Endothelial cell of umbilical vein (primary cell): ENCODE measurements at regions of chr5 and their contacts with region 1.

Region 1: DNA sequence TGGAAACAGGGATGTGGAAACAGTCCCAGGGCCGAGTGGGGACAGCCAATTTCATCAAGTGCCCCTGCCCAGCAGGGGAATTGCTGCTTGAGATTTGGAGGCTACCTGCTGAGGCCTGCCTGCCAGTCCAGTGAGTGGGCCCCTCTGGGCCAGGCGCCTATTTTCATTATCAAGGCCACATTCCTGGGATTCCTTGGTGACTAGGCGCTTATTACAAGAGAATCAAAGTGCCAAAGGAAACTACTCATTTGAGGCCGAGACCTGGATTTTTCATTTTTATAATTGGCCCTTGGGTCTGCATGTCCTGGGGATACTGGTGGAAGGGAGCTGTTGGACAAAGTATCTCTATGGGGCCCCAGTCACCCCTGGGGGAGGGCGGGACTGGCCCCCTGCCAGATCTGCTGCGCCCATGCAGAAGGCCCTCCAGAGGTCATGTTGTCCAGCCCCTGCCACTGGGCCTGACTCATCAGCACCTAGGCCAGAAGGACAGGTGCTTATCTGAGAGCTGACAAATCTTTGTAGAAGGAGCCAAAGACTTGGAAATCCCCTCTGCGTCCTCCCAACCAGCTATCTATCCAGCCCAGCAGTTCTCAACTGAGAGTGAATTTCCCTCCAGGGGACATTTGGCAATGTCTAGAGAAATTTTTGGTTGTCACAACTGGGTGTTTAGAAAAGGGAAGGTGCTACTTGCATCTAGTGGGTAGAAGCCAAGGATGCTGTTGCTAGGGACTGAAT is 45.6 kb downstream of the FOXI1 start:
- DNase-seq: peak; percentile 88
- H3K4me3 ChIP-seq: no peak overlapping the region
- H3K27ac ChIP-seq: peak overlapping the region; percentile 87
- H3K4me1 ChIP-seq: peaks cover 17% of the 10 kb centered on the region
- H3K27me3 ChIP-seq: no peaks in the 10 kb centered on the region
- CTCF ChIP-seq: no peak
- POLR2A ChIP-seq: no peak

Region 2: GRCh38 chr5:169695919-169696490 is 455.3 kb before region 1 on chr5:
- CTCF ChIA-PET with region 1: no interaction called
- POLR2A ChIA-PET with region 1: no interaction called
- dilution Hi-C with region 1: no loop called
- intact Hi-C with region 1: loop called (anchors 2 kb)
- DNase-seq: peak; percentile 96
- H3K4me3 ChIP-seq: no peak overlapping the region
- H3K27ac ChIP-seq: peak overlapping the region; percentile 98
- H3K4me1 ChIP-seq: peaks cover 30% of the 10 kb centered on the region
- H3K27me3 ChIP-seq: no peaks in the 10 kb centered on the region
- CTCF ChIP-seq: no peak
- POLR2A ChIP-seq: peak; percentile 74

Region 3: DNA sequence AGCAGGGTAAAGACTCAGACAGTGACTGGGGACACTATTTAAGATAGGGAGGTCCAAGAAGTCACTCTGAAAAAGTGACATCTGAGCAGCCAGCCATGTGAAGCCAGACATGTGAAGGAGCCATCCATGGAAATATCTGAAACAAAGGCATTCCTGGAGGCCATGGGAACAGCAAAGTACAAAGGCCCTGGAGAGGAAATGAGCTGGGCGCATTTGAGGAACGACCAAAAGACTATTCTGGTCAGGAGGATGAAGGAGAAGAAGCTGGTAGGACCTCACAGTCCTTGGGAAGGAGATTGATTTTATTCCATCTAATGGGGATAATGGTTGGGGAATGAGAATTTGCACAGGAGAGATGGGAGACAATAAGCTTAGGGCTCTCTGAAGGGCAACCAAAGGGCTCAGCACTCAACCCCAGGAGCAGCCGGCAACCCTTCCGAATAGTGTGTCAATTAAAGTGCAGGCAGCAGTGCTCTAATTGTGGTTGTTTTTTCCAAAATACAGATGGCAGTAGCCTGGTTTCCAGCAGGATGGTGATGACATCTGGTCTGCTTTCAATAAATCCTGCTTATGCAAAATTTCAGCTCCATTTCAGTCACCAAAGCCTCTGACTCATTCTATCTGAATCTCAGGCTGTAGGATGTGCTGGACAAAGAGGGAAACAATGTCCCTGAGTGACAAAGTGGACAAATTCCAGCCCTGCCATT is 18.8 kb before region 1 on chr5:
- CTCF ChIA-PET with region 1: interaction called, 4 read pairs
- POLR2A ChIA-PET with region 1: no interaction called
- dilution Hi-C with region 1: no loop called
- intact Hi-C with region 1: loop called (anchors 1 kb)
- DNase-seq: peak; percentile 71
- H3K4me3 ChIP-seq: no peak overlapping the region
- H3K27ac ChIP-seq: peak overlapping the region; percentile 42
- H3K4me1 ChIP-seq: peaks cover 47% of the 10 kb centered on the region
- H3K27me3 ChIP-seq: no peaks in the 10 kb centered on the region
- CTCF ChIP-seq: no peak
- POLR2A ChIP-seq: no peak

Region 4: GRCh38 chr5:170491479-170491878 is 340.2 kb after region 1 on chr5:
- CTCF ChIA-PET with region 1: no interaction called
- POLR2A ChIA-PET with region 1: no interaction called
- dilution Hi-C with region 1: no loop called
- intact Hi-C with region 1: loop called (anchors 5 kb)
- DNase-seq: peak; percentile 91
- H3K4me3 ChIP-seq: no peak overlapping the region
- H3K27ac ChIP-seq: peak overlapping the region; percentile 75
- H3K4me1 ChIP-seq: peaks cover 15% of the 10 kb centered on the region
- H3K27me3 ChIP-seq: no peaks in the 10 kb centered on the region
- CTCF ChIP-seq: no peak
- POLR2A ChIP-seq: peak; percentile 25